ENCODE measurements at regions of chr21 and their contacts with region 1.

Region 1: DNA sequence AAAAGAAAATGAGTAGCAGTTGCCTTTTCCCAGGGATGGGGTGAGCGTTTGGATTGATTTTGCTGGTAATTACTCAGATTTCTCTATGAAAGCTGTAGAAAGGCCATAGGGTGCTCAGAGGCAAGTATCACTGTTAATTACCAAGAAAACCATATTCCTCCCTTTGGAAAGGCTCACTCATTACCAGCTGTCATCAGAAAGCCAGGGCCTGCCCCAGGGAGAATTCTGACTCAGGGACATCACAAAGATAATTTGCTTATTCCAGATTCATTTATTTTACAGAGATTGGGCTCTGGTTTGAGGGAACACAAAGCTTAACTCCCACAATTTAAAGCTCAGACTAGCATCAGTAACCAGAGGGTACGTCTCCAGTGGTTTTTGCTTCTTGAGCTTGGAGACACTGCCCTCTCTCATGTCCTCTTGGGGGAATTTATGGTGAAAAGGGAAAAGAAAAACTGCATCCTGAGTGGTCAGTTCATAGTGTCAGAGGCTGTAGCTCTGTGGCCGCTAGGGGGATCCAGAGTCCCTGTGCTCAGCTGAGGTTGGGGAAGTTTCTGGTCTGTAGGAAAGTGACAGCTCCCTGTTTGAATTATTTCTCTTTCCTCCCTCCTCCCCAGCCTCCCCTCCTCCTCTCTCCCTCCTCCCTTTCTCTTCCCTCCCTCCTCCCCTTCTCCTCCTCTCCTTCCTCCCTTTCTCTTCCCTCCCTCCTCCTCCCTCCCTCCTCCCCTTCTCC is 204.3 kb downstream of the KCNJ6 start:
- DNase-seq: peak; percentile 87
- H3K4me3 ChIP-seq: no peak overlapping the region
- H3K27ac ChIP-seq: no peak overlapping the region
- H3K4me1 ChIP-seq: no peaks in the 10 kb centered on the region
- H3K27me3 ChIP-seq: peaks cover 3% of the 10 kb centered on the region; the same call in 1 of the 2 replicates

Region 2: DNA sequence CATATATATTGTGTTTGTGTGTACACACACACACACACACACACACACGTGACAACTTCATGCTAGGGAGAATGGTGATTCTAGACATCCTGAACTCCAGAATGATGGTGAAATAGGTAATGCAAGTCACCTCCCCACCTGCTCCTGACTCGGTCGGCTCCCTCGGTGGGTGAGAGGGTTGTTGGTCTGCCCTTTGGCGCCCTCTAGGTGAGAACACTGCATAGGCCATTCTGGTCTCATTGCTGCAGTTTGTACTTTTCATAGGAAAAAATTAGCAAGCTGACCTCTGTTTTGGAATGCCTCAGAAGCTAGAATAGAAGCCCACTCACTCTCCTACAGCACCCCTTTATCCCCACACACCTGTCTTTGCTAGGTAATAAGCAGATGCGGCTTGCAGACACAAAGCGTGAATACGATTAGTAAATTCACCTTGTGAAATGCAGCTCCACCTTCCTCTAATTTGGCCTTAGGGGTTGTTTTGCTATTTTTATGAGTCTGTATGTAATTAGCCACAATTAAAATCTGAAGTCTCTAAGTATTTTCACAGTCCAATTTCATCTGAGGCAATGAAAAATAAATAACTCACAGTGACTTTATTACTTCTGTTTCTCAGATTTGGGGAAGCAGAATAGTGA is 414.8 kb after region 1 on chr21:
- in situ Hi-C with region 1: loop called (anchors 10 kb)
- DNase-seq: peak; percentile 67
- H3K4me3 ChIP-seq: no peak overlapping the region
- H3K27ac ChIP-seq: no peak overlapping the region
- H3K4me1 ChIP-seq: no peaks in the 10 kb centered on the region
- H3K27me3 ChIP-seq: no peaks in the 10 kb centered on the region; the same call in 1 of the 2 replicates